B cell (primary cell): ENCODE measurements at regions of chr3 and their contacts with region 1.

Region 1: DNA sequence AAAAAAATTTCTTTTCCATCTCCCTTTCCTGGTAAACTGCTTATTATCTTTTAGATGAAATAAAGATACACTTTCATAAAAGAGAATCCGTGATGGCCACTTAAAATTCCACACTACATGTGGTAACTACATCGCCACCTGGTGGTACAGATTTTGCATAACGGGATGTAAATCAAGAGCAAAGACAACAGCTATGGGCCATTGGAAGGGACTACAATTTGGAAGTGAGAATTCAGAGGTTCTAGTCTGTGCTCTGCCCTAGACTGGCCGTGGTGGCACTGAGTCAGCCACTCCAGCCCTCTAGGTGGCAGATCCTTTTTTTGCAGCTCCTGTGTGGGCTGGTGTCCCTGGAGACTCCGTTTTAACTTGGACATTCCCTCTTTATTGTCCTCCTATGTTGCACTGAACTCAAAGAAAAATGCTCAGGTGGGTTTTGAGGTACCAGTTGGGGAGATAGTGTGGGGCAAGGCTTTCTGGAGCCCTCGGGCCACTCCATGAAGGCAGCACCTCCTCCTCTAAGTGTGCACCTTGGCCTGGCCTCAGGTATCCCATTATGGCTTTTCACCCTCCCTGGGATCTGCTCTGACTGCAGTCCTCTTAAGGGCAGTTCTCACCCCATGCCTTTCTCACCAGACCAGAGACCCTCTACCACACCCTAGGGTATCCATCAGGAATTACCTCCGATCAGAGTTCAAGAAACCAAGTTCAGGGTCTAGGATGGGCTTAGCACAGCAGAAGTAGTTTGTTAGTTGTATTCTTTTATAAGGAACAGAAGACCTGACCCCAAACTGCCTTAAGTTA is 54.9 kb downstream of the SPSB4 start:
- DNase-seq: peak; percentile 69
- ATAC-seq: no peak
- H3K4me3 ChIP-seq: no peak overlapping the region
- H3K4me3 Mint-ChIP-seq: no peak overlapping the region
- H3K27ac ChIP-seq: no peak overlapping the region
- H3K27ac Mint-ChIP-seq: no peak overlapping the region
- H3K4me1 ChIP-seq: no peaks in the 10 kb centered on the region
- H3K4me1 Mint-ChIP-seq: no peaks in the 10 kb centered on the region
- H3K27me3 ChIP-seq: peaks cover 0 to 3% (median 0%) of the 10 kb centered on the region in 4 experiments
- H3K27me3 Mint-ChIP-seq: no peaks in the 10 kb centered on the region
- CTCF ChIP-seq: peak; percentile 88

Region 2: GRCh38 chr3:140898340-140899180 is 207.5 kb before region 1 on chr3:
- CTCF ChIA-PET with region 1: interaction called, 15 read pairs
- POLR2A ChIA-PET with region 1: no interaction called
- intact Hi-C with region 1: loop called (anchors 1 kb)
- DNase-seq: peak; percentile 54
- ATAC-seq: peak; percentile 53
- H3K4me3 ChIP-seq: no peak overlapping the region
- H3K4me3 Mint-ChIP-seq: no peak overlapping the region
- H3K27ac ChIP-seq: no peak overlapping the region
- H3K27ac Mint-ChIP-seq: no peak overlapping the region
- H3K4me1 ChIP-seq: no peaks in the 10 kb centered on the region
- H3K4me1 Mint-ChIP-seq: no peaks in the 10 kb centered on the region
- H3K27me3 ChIP-seq: peaks cover 0 to 6% (median 2%) of the 10 kb centered on the region in 4 experiments
- H3K27me3 Mint-ChIP-seq: peaks cover 36% of the 10 kb centered on the region
- CTCF ChIP-seq: peak; percentile 76

Region 3: DNA sequence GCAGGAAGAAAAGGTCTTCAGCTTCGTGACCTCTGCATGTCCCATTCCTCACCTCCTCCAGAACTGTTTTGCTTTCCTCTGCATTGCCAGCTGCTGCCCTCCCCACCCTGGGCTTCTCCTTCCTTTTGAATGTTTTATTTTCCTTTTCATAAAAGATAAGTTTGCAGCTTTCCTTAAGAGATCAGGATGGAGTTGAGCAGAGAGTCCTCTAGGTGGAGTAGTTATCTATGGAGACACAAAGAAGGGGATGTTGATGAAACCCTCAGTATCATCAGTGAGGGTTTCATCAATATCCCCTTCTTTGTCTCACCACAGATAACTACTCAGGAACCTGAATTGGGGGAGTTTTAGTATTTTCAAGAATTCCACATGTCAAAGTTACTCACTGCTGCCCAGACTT is 183.4 kb before region 1 on chr3:
- CTCF ChIA-PET with region 1: interaction called, 22 read pairs
- POLR2A ChIA-PET with region 1: no interaction called
- intact Hi-C with region 1: no loop called
- DNase-seq: peak; percentile 38
- ATAC-seq: peak; percentile 43
- H3K4me3 ChIP-seq: no peak overlapping the region
- H3K4me3 Mint-ChIP-seq: no peak overlapping the region
- H3K27ac ChIP-seq: no peak overlapping the region
- H3K27ac Mint-ChIP-seq: no peak overlapping the region
- H3K4me1 ChIP-seq: no peaks in the 10 kb centered on the region
- H3K4me1 Mint-ChIP-seq: no peaks in the 10 kb centered on the region
- H3K27me3 ChIP-seq: peaks cover 0 to 4% (median 2%) of the 10 kb centered on the region in 4 experiments
- H3K27me3 Mint-ChIP-seq: peaks cover 28% of the 10 kb centered on the region
- CTCF ChIP-seq: peak; percentile 41

Region 4: DNA sequence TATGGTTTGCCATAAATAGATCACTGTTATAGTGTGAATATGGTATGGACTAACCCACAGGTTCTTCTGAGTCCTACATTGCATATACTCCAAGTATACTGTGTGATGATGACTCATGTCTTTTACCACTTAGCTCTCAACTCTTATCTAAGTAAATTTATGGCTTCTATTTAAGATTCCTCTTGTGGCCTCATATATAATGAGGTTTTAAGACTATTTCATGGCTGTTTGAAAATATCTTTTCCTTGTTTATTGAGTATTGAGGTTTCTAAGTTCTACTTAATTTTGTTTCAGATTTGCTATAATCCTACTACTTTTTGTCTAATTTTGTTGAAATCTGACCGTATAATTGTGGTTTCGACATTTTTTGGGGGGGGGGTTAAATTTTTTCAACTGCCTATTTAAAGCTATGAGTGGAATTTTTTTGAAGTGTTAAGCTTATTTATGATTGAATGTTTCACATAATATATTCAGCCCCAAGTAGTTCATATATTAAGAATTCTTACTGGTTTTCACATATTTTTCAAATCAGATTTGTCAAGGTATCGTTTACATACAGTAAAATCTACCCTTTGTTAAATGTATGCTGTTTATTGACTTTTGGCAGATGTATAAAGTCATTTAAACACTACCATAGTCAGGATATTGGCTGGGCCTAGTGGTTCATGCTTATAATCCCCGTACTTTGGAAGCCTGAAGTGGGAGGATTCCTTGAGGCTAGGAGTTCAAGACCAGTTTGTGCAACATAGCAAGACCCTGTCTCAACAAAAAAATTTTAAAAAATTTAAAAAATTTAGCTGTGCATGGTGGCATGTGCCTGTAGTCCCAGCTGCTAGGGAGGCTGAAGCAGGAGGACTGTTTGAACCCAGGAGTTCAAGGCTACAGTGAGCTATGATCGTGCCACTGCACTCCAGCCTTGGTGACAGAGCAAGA is 152.7 kb before region 1 on chr3:
- CTCF ChIA-PET with region 1: no interaction called
- POLR2A ChIA-PET with region 1: no interaction called
- intact Hi-C with region 1: no loop called
- DNase-seq: no peak
- ATAC-seq: no peak
- H3K4me3 ChIP-seq: no peak overlapping the region
- H3K4me3 Mint-ChIP-seq: no peak overlapping the region
- H3K27ac ChIP-seq: no peak overlapping the region
- H3K27ac Mint-ChIP-seq: no peak overlapping the region
- H3K4me1 ChIP-seq: no peaks in the 10 kb centered on the region
- H3K4me1 Mint-ChIP-seq: peaks cover 41% of the 10 kb centered on the region
- H3K27me3 ChIP-seq: no peaks in the 10 kb centered on the region
- H3K27me3 Mint-ChIP-seq: no peaks in the 10 kb centered on the region
- CTCF ChIP-seq: no peak

Region 5: GRCh38 chr3:141000027-141000663 is 105.9 kb before region 1 on chr3:
- CTCF ChIA-PET with region 1: interaction called, 5 read pairs
- POLR2A ChIA-PET with region 1: no interaction called
- intact Hi-C with region 1: loop called (anchors 1 kb)
- DNase-seq: peak; percentile 32
- ATAC-seq: no peak
- H3K4me3 ChIP-seq: no peak overlapping the region
- H3K4me3 Mint-ChIP-seq: no peak overlapping the region
- H3K27ac ChIP-seq: no peak overlapping the region
- H3K27ac Mint-ChIP-seq: no peak overlapping the region
- H3K4me1 ChIP-seq: no peaks in the 10 kb centered on the region
- H3K4me1 Mint-ChIP-seq: no peaks in the 10 kb centered on the region
- H3K27me3 ChIP-seq: no peaks in the 10 kb centered on the region
- H3K27me3 Mint-ChIP-seq: peaks cover 13% of the 10 kb centered on the region
- CTCF ChIP-seq: peak; percentile 34

Region 6: GRCh38 chr3:141052201-141053069 is 53.6 kb before region 1 on chr3:
- CTCF ChIA-PET with region 1: no interaction called
- POLR2A ChIA-PET with region 1: no interaction called
- intact Hi-C with region 1: no loop called
- DNase-seq: no peak
- ATAC-seq: no peak
- H3K4me3 ChIP-seq: no peak overlapping the region
- H3K4me3 Mint-ChIP-seq: peak overlapping the region; percentile 50
- H3K27ac ChIP-seq: no peak overlapping the region
- H3K27ac Mint-ChIP-seq: no peak overlapping the region
- H3K4me1 ChIP-seq: peaks cover 5 to 9% of the 10 kb centered on the region in 2 donors
- H3K4me1 Mint-ChIP-seq: peaks cover 9% of the 10 kb centered on the region
- H3K27me3 ChIP-seq: peaks cover 0 to 44% (median 17%) of the 10 kb centered on the region in 4 experiments
- H3K27me3 Mint-ChIP-seq: peaks cover 70% of the 10 kb centered on the region
- CTCF ChIP-seq: no peak